ENCODE measurements at regions of chr5 and their contacts with region 1.

Region 1: GRCh38 chr5:74595143-74595925 is 45.2 kb downstream of the ENC1 start:
- DNase-seq: peak; percentile 87
- ATAC-seq: peak; percentile 77
- H3K4me3 ChIP-seq: no peak overlapping the region
- H3K27ac ChIP-seq: peak overlapping the region; percentile 41
- H3K4me1 ChIP-seq: peaks cover 76% of the 10 kb centered on the region
- H3K27me3 ChIP-seq: no peaks in the 10 kb centered on the region
- CTCF ChIP-seq: no peak
- EP300 ChIP-seq: peak in 1 of 2 experiments; percentile 43; a peak in 1 of 4 replicates
- POLR2A ChIP-seq: no peak
- RAD21 ChIP-seq: no peak

Region 2: GRCh38 chr5:74631081-74631953 is 36.0 kb after region 1 on chr5:
- CTCF ChIA-PET with region 1: no interaction called
- POLR2A ChIA-PET with region 1: no interaction called
- in situ Hi-C with region 1: no loop called
- intact Hi-C with region 1: loop called (anchors 5 kb)
- DNase-seq: no peak
- ATAC-seq: no peak
- H3K4me3 ChIP-seq: no peak overlapping the region; a peak in 1 of 6 replicates
- H3K27ac ChIP-seq: peak overlapping the region; percentile 31
- H3K4me1 ChIP-seq: peaks cover 99% of the 10 kb centered on the region
- H3K27me3 ChIP-seq: no peaks in the 10 kb centered on the region
- CTCF ChIP-seq: no peak
- EP300 ChIP-seq: no peak
- POLR2A ChIP-seq: no peak
- RAD21 ChIP-seq: no peak

Region 3: GRCh38 chr5:74647096-74647495 is 51.8 kb after region 1 on chr5:
- CTCF ChIA-PET with region 1: no interaction called
- POLR2A ChIA-PET with region 1: no interaction called
- in situ Hi-C with region 1: no loop called
- intact Hi-C with region 1: no loop called
- DNase-seq: no peak
- ATAC-seq: no peak
- H3K4me3 ChIP-seq: no peak overlapping the region
- H3K27ac ChIP-seq: no peak overlapping the region
- H3K4me1 ChIP-seq: peaks cover 60% of the 10 kb centered on the region
- H3K27me3 ChIP-seq: no peaks in the 10 kb centered on the region
- CTCF ChIP-seq: no peak
- EP300 ChIP-seq: no peak
- POLR2A ChIP-seq: no peak
- RAD21 ChIP-seq: no peak

Measured in HepG2 (cell line).